ENCODE measurements at regions of chr12 and their contacts with region 1.

Region 1: DNA sequence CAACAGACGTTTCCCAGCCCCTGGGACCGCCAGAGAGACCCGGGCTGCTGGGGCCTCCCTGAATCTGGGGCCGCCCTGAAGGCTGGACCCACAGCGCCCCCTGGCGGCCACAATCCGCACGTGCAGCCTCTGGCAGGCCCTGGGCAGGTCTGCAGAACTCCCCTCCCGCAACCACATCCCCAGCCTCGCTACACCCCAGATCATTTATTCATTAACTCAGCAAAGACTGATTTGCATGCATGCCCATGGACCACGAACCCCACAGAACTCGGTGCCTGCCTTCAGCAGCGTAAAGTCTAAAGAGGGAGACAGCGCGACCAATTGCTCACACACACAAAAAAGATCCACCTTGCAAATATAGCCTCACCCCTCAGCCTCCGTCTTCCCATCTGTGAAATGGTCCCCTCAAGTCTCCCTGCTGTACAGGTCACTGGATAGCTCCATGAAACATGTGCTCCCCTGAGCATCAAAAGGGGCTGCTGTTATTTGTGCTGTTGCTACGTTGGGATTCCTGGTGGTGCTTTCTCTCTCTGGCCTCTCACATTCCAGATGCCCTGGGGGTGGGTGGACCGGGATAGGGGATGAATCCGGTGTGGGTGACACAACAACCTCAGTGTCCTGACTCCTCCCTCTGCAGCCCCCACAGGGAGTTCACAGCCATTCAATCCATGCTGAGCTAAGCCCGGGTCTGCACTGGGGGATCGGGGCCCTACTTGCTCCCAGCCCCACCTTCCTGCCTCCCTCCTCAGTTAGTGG is 96.4 kb downstream of the SCARB1 start:
- DNase-seq: peak; percentile 69 to 89 (median 84)
- H3K4me3 ChIP-seq: no peak overlapping the region
- H3K27ac ChIP-seq: peak overlapping the region in 41 of 59 donors; percentile 2 to 79 (median 43)
- H3K27me3 ChIP-seq: no peaks in the 10 kb centered on the region
- CTCF ChIP-seq: peak; percentile 99 to 100 (median 100)

Region 2: DNA sequence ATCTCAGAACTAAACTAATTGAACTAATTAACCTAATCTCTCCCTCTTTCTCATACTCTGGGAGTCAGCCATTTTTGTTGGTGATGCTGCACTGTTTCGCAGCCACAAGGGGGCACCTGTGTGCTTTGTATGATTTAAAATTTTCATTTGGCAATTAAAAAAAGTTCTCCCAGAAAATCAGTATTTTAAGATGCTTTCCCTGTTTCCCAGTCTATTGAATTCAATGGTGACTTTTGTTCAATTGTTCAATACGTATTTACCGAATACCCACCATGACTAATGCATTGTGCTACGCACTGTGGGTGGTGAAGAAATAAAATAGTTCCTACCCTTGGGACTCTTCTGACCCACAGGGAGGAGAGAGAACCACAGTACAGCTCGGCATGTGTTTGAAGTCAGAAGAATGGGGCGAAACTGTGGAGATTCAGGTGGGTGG is 730.6 kb before region 1 on chr12:
- intact Hi-C with region 1: loop called (anchors 2 to 5 kb)
- DNase-seq: peak in 6 of 10 donors; percentile 35 to 62 (median 49)
- H3K4me3 ChIP-seq: peak overlapping the region in 1 of 59 donors; percentile 7
- H3K27ac ChIP-seq: peak overlapping the region in 5 of 59 donors; percentile 5 to 47 (median 26)
- H3K27me3 ChIP-seq: no peaks in the 10 kb centered on the region
- CTCF ChIP-seq: peak; percentile 91 to 99 (median 97)

Region 3: DNA sequence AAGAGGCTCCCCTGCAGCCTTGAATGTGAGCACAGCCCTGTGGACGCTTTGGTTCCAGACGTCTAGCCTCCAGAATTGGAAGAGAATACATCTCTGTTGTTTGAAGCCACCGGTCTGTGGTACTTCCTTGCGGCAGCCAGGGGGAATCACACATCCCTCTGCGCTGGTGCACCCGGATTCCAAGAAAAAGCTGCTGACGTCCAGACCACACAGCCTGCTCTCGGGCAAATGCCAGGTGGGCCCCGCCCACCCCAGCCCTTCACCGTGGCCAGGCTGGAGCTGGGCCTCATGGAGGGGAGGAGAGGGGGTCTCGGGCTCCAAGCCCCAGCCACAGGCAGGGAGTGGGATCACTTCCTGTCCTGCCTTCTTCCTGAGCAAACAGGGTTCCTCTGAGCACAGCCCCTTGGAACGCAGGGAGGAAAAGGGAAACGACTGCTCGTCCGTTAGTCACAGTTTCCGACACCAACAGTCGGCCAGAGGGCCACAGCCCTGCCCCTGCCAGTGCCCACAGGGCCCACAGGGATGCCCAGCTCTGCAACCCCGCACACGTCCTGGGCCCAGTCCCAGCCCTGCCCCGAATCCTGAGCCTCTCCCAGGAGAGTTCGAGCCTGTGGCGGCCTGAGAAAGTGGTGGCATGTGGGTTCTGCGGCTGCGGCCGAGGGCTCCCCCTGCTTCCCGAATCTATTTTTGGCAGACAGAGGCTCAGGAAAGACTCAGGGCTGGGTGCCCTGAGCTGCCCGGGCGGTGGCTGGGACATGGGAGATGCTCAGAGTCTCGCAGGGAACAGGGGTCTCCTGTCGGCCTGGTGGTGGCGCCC is 387.1 kb before region 1 on chr12:
- intact Hi-C with region 1: loop called in 1 of 2 experiments (anchors 10 kb)
- DNase-seq: peak in 7 of 10 donors; percentile 48 to 72 (median 68)
- H3K4me3 ChIP-seq: peak overlapping the region in 7 of 59 donors; percentile 5 to 22 (median 16)
- H3K27ac ChIP-seq: peak overlapping the region in 57 of 59 donors; percentile 41 to 94 (median 81)
- H3K27me3 ChIP-seq: no peaks in the 10 kb centered on the region
- CTCF ChIP-seq: peak in 52 of 56 donors; percentile 32 to 71 (median 53)

Region 4: DNA sequence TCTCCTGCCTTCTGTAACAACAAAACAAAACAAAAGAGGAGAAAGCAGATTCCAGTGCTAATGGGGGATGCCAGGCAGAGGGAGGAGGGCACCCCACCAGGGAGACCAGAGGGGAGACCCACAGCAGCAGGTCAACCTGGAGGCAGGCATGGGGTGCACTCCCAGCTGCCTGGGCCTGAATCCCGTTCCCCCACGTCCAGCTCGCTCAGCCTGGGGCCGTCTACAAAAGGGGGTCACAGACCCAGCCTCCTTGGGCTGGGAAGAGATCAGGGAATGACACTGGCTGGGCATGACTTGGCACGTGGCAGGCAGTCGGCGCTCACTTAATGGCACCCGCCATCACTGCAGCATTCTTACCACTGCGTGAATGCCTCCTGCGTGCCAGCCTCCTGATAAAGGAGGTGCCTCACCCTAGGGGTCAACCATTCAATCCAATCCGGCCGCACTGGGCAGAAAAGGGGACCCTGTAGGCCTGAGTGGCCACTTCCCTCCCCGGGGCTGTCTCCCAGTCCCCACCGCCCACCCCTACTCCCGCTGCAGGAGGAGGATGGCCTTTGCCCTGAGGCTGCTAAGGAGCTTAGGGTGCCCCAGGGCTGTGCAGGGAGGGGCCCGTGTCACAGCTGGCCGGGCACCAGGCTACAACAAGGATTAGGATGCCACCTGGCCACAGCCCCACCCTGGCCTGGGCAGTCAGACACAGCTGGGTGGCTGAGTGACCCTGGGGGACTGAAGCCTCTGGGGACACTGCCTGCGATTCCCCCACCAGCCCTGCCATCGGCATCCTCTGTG is 287.4 kb before region 1 on chr12:
- intact Hi-C with region 1: loop called in 1 of 2 experiments (anchors 5 kb)
- DNase-seq: no peak
- H3K4me3 ChIP-seq: no peak overlapping the region
- H3K27ac ChIP-seq: peak overlapping the region in 45 of 59 donors; percentile 2 to 79 (median 57)
- H3K27me3 ChIP-seq: no peaks in the 10 kb centered on the region
- CTCF ChIP-seq: no peak

Region 5: GRCh38 chr12:124518051-124518932 is 249.0 kb before region 1 on chr12:
- intact Hi-C with region 1: loop called (anchors 1 to 5 kb)
- DNase-seq: peak; percentile 93 to 99 (median 97)
- H3K4me3 ChIP-seq: peak overlapping the region; percentile 44 to 82 (median 66)
- H3K27ac ChIP-seq: peak overlapping the region; percentile 94 to 100 (median 99)
- H3K27me3 ChIP-seq: no peaks in the 10 kb centered on the region
- CTCF ChIP-seq: peak in 6 of 56 donors; percentile 12 to 22 (median 16)

Region 6: GRCh38 chr12:124667506-124668326 is 99.5 kb before region 1 on chr12:
- intact Hi-C with region 1: loop called in 1 of 2 experiments (anchors 5 kb)
- DNase-seq: no peak
- H3K4me3 ChIP-seq: no peak overlapping the region
- H3K27ac ChIP-seq: no peak overlapping the region
- H3K27me3 ChIP-seq: no peaks in the 10 kb centered on the region
- CTCF ChIP-seq: no peak

Region 7: GRCh38 chr12:124694846-124695497 is 72.3 kb before region 1 on chr12:
- intact Hi-C with region 1: no loop called
- DNase-seq: no peak
- H3K4me3 ChIP-seq: no peak overlapping the region
- H3K27ac ChIP-seq: peak overlapping the region in 5 of 59 donors; percentile 6 to 45 (median 18)
- H3K27me3 ChIP-seq: no peaks in the 10 kb centered on the region
- CTCF ChIP-seq: no peak

Region 8: GRCh38 chr12:125492354-125493270 is 725.4 kb after region 1 on chr12:
- intact Hi-C with region 1: no loop called
- DNase-seq: no peak
- H3K4me3 ChIP-seq: no peak overlapping the region
- H3K27ac ChIP-seq: peak overlapping the region in 10 of 59 donors; percentile 3 to 37 (median 19)
- H3K27me3 ChIP-seq: no peaks in the 10 kb centered on the region
- CTCF ChIP-seq: no peak

Measured in dorsolateral prefrontal cortex (tissue), 120 donors.